ENCODE measurements at regions of chr7 and their contacts with region 1.

Region 1: DNA sequence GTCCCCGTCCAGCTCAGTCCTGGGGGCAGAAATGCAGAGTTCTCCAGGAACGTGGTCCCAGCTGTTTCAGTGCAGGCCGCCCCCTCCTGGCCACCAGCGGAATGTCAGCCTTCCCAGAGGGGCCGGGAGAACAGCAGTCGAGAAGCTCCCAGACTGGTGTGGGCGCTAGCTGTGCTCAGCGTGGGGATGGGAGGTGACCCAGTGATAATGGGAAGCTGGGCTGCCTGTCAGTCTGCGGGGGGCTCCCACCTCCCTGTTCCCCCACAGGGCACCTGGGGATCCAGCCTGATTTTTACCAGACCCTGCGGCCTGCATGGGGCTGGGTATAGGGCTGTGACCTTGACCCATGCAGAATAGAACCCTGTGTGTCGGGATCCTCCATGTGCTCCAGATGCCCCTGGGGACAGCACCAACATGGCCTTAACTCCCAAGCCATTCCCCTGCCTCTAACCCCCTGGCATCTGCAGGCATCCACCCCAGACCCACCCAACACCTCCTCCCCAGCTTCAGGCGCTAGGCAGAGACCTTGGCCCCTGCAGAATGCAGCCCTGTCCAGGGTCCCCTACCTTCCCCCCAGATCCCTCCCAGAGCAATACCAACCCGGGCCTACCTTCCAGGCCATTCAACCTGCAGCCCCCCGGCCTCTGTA is 946 bp upstream of the ELN start:
- DNase-seq: peak in 1 of 2 donors; percentile 94
- H3K4me3 ChIP-seq: peak overlapping the region; percentile 75 to 83
- H3K27ac ChIP-seq: peak overlapping the region; percentile 93 to 98
- H3K4me1 ChIP-seq: peaks cover 16 to 58% of the 10 kb centered on the region in 2 donors
- H3K27me3 ChIP-seq: no peaks in the 10 kb centered on the region
- CTCF ChIP-seq: peak; percentile 92 to 96 (median 93)

Region 2: GRCh38 chr7:73865738-73866445 is 161.1 kb before region 1 on chr7:
- intact Hi-C with region 1: loop called (anchors 1 kb)
- DNase-seq: no peak
- H3K4me3 ChIP-seq: no peak overlapping the region
- H3K27ac ChIP-seq: no peak overlapping the region
- H3K4me1 ChIP-seq: peaks cover 21 to 28% of the 10 kb centered on the region in 2 donors
- H3K27me3 ChIP-seq: no peaks in the 10 kb centered on the region
- CTCF ChIP-seq: peak; percentile 68 to 83 (median 81)

Region 3: DNA sequence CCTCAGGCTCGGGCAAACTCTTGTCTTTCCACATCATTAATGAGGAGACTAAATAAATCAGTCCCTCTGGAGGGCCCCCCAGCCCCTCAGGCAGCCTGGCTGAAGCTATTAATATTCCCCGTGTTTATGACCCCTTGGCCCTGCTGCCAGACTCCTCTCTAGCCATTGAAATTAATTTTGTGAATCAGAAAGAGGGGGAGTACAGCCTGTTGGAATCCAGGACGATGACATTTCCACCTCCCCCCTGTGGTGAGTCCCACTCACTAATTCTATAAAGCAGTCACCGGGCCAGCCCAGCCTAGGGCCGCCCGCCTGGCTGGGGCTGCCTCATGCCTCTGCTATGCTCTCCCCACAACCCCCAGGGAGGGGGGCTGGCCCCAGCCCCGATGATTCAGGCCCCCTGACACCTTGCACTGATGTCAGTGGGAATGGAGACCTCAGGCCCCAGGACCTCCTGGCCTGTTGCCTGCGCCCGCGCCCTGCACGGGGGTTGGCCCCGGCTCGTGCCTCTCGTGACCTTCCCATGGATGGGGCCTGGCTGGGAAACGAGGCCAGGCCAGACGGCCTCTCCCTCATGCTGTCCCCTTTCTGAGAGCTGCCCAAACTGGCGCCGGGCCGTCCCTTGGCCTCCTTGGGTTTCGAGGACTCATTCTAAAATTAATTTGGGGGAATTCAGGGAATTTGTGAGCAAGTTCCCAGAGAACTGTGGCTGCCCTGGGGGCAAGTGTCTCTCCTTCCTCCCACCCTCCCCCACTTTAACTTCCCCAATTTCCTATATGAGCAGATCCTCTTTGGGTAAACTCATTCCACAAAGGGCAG is 132.1 kb before region 1 on chr7:
- intact Hi-C with region 1: loop called (anchors 1 kb)
- DNase-seq: peak; percentile 92 to 99
- H3K4me3 ChIP-seq: no peak overlapping the region
- H3K27ac ChIP-seq: peak overlapping the region; percentile 97
- H3K4me1 ChIP-seq: peaks cover 21 to 51% of the 10 kb centered on the region in 2 donors
- H3K27me3 ChIP-seq: no peaks in the 10 kb centered on the region
- CTCF ChIP-seq: peak in 2 of 3 experiments; percentile 25 to 42

Region 4: DNA sequence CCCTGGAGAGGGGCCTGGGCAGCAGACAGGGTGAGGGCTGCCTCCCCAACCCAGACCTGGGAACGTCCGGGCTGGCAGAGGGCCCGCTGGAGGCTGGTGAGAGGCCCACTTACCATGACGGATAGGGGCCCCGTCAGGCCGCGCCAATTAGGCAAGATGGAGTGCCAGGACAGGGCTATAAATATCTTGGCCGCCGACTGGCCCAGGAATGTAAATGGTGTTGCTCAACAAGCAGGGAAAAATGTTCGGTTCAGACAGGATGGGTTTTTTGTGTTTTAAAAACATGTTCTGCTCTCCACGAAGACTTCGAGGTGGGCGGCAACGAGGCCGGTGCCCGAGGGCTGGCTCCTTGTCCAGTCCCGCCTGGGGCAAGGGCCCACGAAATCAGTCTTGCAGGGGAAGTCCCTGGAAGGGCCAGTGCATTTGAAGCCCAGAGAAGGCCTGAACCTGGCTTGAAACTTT is 34.9 kb before region 1 on chr7:
- intact Hi-C with region 1: loop called (anchors 2 kb)
- DNase-seq: peak; percentile 82 to 97
- H3K4me3 ChIP-seq: no peak overlapping the region
- H3K27ac ChIP-seq: peak overlapping the region; percentile 94
- H3K4me1 ChIP-seq: peaks cover 12 to 65% of the 10 kb centered on the region in 2 donors
- H3K27me3 ChIP-seq: no peaks in the 10 kb centered on the region
- CTCF ChIP-seq: no peak

Region 5: DNA sequence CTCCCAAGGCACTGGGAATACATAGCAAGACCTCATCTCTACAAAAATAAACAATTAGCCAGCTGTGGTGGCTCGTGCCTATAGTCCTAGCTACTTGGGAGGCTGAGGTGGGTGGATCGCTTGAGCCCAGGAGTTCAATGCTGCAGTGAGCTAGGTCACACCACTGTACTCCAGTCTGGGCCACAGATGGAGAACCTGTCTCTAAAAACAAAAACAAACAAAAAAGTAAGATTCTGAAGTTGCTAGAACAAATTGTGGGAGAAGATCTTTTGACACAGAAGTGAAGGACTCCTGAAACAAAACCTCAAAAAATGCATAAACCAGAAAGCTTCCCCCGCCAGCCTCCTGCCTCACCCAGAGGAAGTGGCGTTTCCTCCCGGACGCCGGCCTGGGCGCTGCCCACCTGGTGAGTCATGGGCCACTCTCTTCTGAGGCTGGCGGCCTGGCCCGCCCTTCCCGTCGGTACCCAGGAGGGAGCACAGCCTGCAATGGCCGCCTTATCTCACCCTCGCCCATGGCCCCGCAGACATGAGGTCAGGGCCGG is 24.5 kb before region 1 on chr7:
- intact Hi-C with region 1: loop called (anchors 1 kb)
- DNase-seq: peak; percentile 68 to 94
- H3K4me3 ChIP-seq: peak overlapping the region; percentile 20 to 29
- H3K27ac ChIP-seq: peak overlapping the region; percentile 95 to 99
- H3K4me1 ChIP-seq: peaks cover 22 to 63% of the 10 kb centered on the region in 2 donors
- H3K27me3 ChIP-seq: no peaks in the 10 kb centered on the region
- CTCF ChIP-seq: no peak

Region 6: DNA sequence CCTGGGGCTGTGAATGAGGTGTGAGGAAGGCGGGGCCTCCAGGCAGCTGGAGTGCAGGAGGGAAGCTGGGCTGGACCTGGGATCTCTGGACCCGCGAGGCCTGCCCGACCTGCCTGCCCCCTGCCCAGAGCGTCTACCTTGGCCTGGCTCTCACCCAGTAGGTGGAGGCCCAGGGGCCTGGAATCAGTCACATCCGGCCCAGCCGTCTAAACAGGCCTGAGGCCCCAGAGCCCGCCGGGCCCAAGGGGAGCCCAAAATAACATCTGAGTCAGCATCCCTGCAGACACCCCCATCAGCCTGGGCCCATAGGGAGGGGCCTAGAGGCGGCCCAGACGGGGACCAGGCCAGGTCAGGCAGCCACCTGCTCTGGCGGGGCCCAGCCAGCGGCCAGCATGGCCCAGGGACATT is 14.2 kb before region 1 on chr7:
- intact Hi-C with region 1: loop called (anchors 2 kb)
- DNase-seq: peak; percentile 77 to 92
- H3K4me3 ChIP-seq: peak overlapping the region in 1 of 2 donors; percentile 7
- H3K27ac ChIP-seq: peak overlapping the region; percentile 88 to 94
- H3K4me1 ChIP-seq: peaks cover 22 to 56% of the 10 kb centered on the region in 2 donors
- H3K27me3 ChIP-seq: no peaks in the 10 kb centered on the region
- CTCF ChIP-seq: no peak

Region 7: GRCh38 chr7:74043523-74043951 is 16.5 kb after region 1 on chr7:
- intact Hi-C with region 1: no loop called
- DNase-seq: no peak
- H3K4me3 ChIP-seq: no peak overlapping the region
- H3K27ac ChIP-seq: peak overlapping the region; percentile 68 to 98
- H3K4me1 ChIP-seq: peaks cover 0 to 27% of the 10 kb centered on the region in 2 donors
- H3K27me3 ChIP-seq: no peaks in the 10 kb centered on the region
- CTCF ChIP-seq: no peak

Region 8: DNA sequence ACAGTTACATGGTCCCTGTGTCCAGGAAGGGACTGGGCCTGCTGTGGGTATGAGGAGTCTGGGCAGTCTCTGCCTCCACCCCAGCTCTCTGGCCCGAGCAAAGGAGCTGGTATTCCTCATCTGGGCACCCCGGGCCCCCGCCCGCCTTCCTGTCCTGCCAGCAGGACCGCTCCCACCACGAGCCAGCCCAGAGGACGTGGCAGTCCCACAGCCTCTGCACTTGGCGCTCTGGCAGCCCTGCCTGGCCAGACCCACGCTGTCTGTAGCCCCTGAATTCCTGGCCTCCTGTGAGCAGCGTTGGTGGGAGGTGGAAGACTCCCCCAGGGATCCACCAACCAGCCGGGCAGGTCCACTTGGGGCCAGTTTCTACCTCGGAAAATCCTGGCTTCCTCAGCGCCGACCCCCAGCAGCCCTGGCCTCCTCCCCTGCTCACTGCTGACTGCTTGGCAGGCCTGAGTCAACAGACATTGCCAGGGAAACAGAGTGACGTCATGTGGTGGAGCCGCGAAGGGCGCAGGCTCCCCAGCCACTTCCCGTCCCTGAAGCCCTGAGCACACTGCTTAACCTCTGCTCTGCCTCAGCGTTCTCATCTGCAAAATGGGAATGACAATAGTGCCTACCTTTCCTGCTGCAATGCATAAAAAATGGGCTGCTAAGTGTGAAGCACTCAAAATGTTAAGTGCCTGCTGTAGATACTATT is 35.0 kb after region 1 on chr7:
- intact Hi-C with region 1: loop called (anchors 5 kb)
- DNase-seq: peak; percentile 76 to 96
- H3K4me3 ChIP-seq: no peak overlapping the region
- H3K27ac ChIP-seq: peak overlapping the region; percentile 81 to 90
- H3K4me1 ChIP-seq: peaks cover 5 to 27% of the 10 kb centered on the region in 2 donors
- H3K27me3 ChIP-seq: no peaks in the 10 kb centered on the region
- CTCF ChIP-seq: no peak

Region 9: DNA sequence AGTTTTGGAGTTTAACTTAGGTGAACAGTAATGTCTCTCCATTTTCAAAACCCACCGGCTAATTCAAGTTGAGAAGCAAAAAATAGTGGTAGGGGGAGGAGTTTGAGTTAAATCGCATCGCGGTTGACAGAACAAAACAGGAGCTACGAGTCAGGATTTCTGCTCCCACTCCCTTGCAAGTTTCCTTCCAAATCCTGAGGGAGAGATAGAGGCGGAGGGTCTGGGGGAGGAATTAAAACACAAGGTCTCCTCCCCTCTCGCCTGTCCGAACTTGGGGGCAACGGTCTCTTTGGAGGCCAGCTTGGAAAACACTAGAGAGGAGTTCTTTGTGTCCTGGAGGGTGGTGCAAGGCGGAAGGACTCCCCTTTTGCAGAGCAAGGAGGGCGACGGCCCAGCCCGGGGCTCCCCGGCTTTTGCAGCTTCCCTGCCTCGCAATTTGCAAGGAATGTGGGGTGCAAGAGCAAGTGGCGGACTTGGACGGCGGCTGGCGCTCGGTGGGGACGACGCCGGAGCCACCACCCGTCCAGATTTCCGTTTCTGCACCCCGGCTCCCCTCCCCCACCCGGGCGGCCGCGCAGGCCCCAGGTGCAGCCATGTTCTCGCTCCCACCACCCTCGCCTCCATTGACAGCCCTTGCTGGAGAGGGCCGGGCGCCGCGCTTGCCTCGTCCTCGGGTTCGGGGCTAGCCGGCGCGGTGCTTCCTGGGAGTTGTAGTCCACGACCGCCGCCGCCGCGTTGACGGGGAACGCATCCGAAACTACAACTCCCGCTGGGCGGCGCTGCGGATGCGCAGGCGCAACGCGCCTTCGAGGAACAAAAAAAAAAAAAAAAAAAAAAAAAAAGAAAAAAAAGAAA is 630.0 kb after region 1 on chr7:
- intact Hi-C with region 1: no loop called
- DNase-seq: peak; percentile 90 to 99
- H3K4me3 ChIP-seq: peak overlapping the region; percentile 92 to 95
- H3K27ac ChIP-seq: peak overlapping the region; percentile 85 to 98
- H3K4me1 ChIP-seq: peaks cover 0 to 29% of the 10 kb centered on the region in 2 donors
- H3K27me3 ChIP-seq: no peaks in the 10 kb centered on the region
- CTCF ChIP-seq: peak in 1 of 3 experiments; percentile 24